Prostate gland (tissue), 2 donors: ENCODE measurements at regions of chr7 and their contacts with region 1.

Region 1: DNA sequence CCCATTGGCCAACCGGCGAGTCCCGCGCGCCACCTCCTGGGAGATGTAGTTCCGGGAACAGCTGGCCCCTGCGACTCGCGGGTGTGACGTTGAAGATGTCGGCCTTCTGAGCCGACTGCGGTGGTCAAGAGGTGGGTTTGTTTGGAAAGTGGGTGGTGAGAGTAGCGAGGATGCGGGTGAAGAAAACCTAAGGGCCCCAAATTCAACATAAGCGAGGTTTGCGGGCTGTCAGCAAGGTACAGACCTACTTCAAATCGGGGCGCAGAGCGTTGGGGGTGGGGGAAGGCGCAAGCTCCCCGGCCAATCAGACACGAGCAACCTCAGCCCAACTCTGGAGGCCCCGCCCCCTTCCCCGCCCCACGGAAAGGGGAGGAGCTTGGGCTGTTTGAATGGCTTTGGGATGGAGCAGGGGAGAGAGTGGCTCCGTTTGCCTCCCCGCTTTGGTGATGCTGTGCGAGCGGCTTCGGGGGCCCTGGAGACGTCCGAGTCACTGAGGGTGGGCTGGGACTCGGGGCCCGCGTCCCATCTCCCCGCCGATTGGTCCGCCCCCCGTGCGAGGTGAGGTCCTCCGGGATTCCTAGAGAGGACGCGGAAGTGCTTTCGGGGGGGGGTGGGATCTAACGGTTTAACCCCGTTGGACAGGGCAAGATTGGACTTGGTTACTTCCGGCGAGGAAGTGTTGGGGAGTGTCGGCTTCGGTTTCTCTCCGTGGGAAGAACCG is at the start of gene ZKSCAN5:
- DNase-seq: peak; percentile 97
- H3K4me3 ChIP-seq: peak within 1 kb of the TSS; percentile 51 to 72
- H3K27ac ChIP-seq: peak within 1 kb of the TSS; percentile 82 to 95
- H3K4me1 ChIP-seq: peaks cover 19% of the 10 kb centered on the region
- H3K27me3 ChIP-seq: no peaks in the 10 kb centered on the region
- CTCF ChIP-seq: peak in 3 of 4 experiments; percentile 37 to 54 (median 44)
- POLR2A ChIP-seq: peak; percentile 27
- total RNA-seq, gene ZKSCAN5: 7.8 to 13.2 TPM

Region 2: GRCh38 chr7:99465421-99465768 is 39.4 kb before region 1 on chr7:
- intact Hi-C with region 1: loop called (anchors 1 kb)
- DNase-seq: no peak
- H3K4me3 ChIP-seq: peak overlapping the region; percentile 78 to 97
- H3K27ac ChIP-seq: peak overlapping the region; percentile 85 to 89
- H3K4me1 ChIP-seq: peaks cover 12% of the 10 kb centered on the region
- H3K27me3 ChIP-seq: no peaks in the 10 kb centered on the region
- CTCF ChIP-seq: no peak
- POLR2A ChIP-seq: no peak